AG04450 (cell line): ENCODE measurements at regions of chr7 and their contacts with region 1.

Region 1: DNA sequence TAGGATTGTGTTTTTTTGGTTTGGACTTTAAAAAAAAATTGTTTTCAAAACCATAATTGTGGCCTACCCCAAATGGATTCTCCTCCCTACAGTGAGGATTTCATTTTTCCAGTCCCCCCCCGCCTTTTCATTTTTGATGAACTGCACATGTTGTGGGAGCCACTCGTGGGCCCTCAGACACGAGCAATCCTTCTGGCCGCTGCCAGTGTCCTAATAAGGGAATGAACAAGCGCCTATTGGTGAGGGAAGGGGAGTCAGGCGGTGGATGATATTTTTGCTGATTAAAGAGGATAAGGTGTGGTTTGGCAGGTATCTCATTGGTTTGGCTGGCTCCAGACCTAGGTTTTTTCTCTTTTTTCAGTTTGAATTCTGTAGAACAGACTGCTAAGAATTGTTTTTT is 78.7 kb upstream of the AGBL3 start:
- DNase-seq: no peak
- H3K4me3 ChIP-seq: no peak overlapping the region
- H3K27ac ChIP-seq: no peak overlapping the region
- H3K27me3 ChIP-seq: no peaks in the 10 kb centered on the region
- CTCF ChIP-seq: no peak

Region 2: GRCh38 chr7:134936893-134937525 is 29.4 kb after region 1 on chr7:
- CTCF ChIA-PET with region 1: no interaction called
- POLR2A ChIA-PET with region 1: interaction called, 10 read pairs
- DNase-seq: no peak
- H3K4me3 ChIP-seq: no peak overlapping the region
- H3K27ac ChIP-seq: no peak overlapping the region
- H3K27me3 ChIP-seq: no peaks in the 10 kb centered on the region
- CTCF ChIP-seq: no peak